Activated naive CD4-positive, alpha-beta T cell treated with anti-CD3 and anti-CD28 coated beads for 36 hours (primary cell): ENCODE measurements at regions of chr21 and their contacts with region 1.

Region 1: GRCh38 chr21:25734904-25735645 is at the starts of genes ATP5PF and GABPA:
- DNase-seq: peak; percentile 99
- H3K4me3 Mint-ChIP-seq: peak within 1 kb of the TSS; percentile 94
- H3K27ac Mint-ChIP-seq: peak within 1 kb of the TSS; percentile 99
- H3K4me1 Mint-ChIP-seq: peaks cover 48% of the 10 kb centered on the region
- H3K27me3 Mint-ChIP-seq: no peaks in the 10 kb centered on the region
- total RNA-seq, gene ATP5PF: 124 to 132 TPM
- total RNA-seq, gene GABPA: 18.5 to 21.2 TPM

Region 2: DNA sequence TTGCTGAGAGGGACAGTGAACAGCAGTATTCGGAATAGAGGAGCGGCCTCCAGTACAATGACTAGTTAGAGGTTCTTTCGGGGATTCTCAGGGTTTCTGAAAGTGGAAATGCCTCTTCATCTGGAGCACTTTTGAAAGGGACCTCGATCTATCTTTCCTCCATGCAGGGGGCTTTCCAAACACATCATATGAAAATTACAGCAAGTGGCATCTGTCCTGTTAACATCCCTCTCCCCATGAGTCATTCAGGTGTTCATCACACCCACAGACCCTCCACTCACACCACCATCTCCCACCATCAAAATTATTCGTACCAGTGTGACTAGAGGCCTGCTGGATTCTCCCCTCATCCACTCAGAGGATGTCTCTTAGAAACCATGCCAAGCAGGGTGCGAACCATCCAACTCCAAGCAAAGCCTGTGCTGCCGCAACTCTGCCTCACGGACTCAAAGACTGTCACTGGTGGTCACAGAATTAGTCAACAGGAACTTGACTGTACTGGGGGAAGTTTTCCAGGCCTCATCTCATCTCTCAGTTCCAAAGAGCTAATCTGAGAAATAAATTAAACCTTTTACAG is 338.9 kb before region 1 on chr21:
- CTCF ChIA-PET with region 1: no interaction called
- intact Hi-C with region 1: loop called (anchors 1 kb)
- DNase-seq: peak; percentile 89
- H3K4me3 Mint-ChIP-seq: peak overlapping the region; percentile 41
- H3K27ac Mint-ChIP-seq: peak overlapping the region; percentile 81
- H3K4me1 Mint-ChIP-seq: peaks cover 18% of the 10 kb centered on the region
- H3K27me3 Mint-ChIP-seq: peaks cover 2% of the 10 kb centered on the region

Region 3: GRCh38 chr21:25501996-25502665 is 232.9 kb before region 1 on chr21:
- CTCF ChIA-PET with region 1: no interaction called
- intact Hi-C with region 1: loop called (anchors 2 kb)
- DNase-seq: peak; percentile 87
- H3K4me3 Mint-ChIP-seq: peak overlapping the region; percentile 53
- H3K27ac Mint-ChIP-seq: peak overlapping the region; percentile 92
- H3K4me1 Mint-ChIP-seq: peaks cover 78% of the 10 kb centered on the region
- H3K27me3 Mint-ChIP-seq: no peaks in the 10 kb centered on the region

Region 4: GRCh38 chr21:25561668-25562641 is 173.1 kb before region 1 on chr21:
- CTCF ChIA-PET with region 1: no interaction called
- intact Hi-C with region 1: loop called (anchors 5 kb)
- DNase-seq: peak; percentile 81
- H3K4me3 Mint-ChIP-seq: peak overlapping the region; percentile 91
- H3K27ac Mint-ChIP-seq: peak overlapping the region; percentile 96
- H3K4me1 Mint-ChIP-seq: peaks cover 45% of the 10 kb centered on the region
- H3K27me3 Mint-ChIP-seq: no peaks in the 10 kb centered on the region

Region 5: GRCh38 chr21:25639551-25640201 is 95.4 kb before region 1 on chr21:
- CTCF ChIA-PET with region 1: no interaction called
- intact Hi-C with region 1: loop called (anchors 1 kb)
- DNase-seq: peak; percentile 57
- H3K4me3 Mint-ChIP-seq: peak overlapping the region; percentile 67
- H3K27ac Mint-ChIP-seq: no peak overlapping the region
- H3K4me1 Mint-ChIP-seq: peaks cover 20% of the 10 kb centered on the region
- H3K27me3 Mint-ChIP-seq: peaks cover 31% of the 10 kb centered on the region

Region 6: DNA sequence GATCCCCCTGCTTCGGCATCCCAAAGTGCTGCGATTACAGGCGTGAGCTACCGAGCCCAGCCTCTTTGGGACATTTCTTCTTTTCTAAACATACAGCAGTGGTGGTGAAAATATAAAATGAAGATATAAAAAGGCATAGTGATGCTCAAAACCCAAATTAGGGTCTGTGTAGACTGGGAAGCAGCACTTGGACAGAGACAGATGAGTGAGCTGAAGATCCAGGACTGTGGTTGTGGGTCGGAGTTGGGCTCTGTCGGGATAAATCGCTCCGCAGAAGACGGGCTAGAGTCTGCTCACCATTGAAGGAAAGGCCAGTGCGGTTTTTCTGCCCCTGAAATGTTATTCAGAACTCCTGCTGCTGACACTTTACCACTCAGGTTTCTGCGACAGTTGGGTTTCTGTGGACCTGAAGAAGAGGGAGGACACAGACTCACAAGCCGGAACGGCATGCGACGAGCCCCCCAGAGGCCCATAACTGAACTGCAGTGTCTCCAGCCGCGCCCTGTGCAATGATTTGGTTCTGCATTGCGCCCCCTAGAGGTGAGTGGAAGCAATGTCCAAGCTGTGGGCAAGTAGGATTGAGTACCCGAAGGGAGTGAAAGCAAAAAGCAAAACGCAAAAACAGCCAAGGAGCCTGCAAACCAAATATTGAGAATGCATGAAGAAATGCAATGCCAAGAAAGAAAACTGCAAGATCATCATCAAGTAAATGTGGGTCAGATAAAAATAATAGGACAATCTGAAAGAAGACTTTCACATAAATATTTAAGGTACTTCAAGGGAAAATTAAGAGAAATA is 66.3 kb after region 1 on chr21:
- CTCF ChIA-PET with region 1: interaction called, 5 read pairs
- intact Hi-C with region 1: loop called (anchors 1 kb)
- DNase-seq: peak; percentile 95
- H3K4me3 Mint-ChIP-seq: peak overlapping the region; percentile 23
- H3K27ac Mint-ChIP-seq: no peak overlapping the region
- H3K4me1 Mint-ChIP-seq: peaks cover 6% of the 10 kb centered on the region
- H3K27me3 Mint-ChIP-seq: peaks cover 8% of the 10 kb centered on the region

Region 7: GRCh38 chr21:26170471-26171257 is 435.6 kb after region 1 on chr21 and contains the start of gene APP:
- CTCF ChIA-PET with region 1: no interaction called
- intact Hi-C with region 1: loop called (anchors 1 kb)
- DNase-seq: peak; percentile 87
- H3K4me3 Mint-ChIP-seq: peak within 1 kb of the TSS; percentile 90
- H3K27ac Mint-ChIP-seq: peak within 1 kb of the TSS; percentile 66
- H3K4me1 Mint-ChIP-seq: peaks cover 21% of the 10 kb centered on the region
- H3K27me3 Mint-ChIP-seq: no peaks in the 10 kb centered on the region
- total RNA-seq, gene APP: 60.6 to 61.1 TPM